Ovary (tissue), 10 donors: ENCODE measurements at regions of chr2 and their contacts with region 1.

Region 1: GRCh38 chr2:177263451-177264208 is 897 bp downstream of the NFE2L2 start:
- DNase-seq: peak; percentile 99 to 100 (median 99)
- H3K4me3 ChIP-seq: peak overlapping the region; percentile 100
- H3K27ac ChIP-seq: peak overlapping the region; percentile 100
- H3K4me1 ChIP-seq: peaks cover 10% of the 10 kb centered on the region
- H3K27me3 ChIP-seq: no peaks in the 10 kb centered on the region
- CTCF ChIP-seq: peak; percentile 90 to 97 (median 97)
- EP300 ChIP-seq: peak; percentile 79
- POLR2A ChIP-seq: peak; percentile 79

Region 2: DNA sequence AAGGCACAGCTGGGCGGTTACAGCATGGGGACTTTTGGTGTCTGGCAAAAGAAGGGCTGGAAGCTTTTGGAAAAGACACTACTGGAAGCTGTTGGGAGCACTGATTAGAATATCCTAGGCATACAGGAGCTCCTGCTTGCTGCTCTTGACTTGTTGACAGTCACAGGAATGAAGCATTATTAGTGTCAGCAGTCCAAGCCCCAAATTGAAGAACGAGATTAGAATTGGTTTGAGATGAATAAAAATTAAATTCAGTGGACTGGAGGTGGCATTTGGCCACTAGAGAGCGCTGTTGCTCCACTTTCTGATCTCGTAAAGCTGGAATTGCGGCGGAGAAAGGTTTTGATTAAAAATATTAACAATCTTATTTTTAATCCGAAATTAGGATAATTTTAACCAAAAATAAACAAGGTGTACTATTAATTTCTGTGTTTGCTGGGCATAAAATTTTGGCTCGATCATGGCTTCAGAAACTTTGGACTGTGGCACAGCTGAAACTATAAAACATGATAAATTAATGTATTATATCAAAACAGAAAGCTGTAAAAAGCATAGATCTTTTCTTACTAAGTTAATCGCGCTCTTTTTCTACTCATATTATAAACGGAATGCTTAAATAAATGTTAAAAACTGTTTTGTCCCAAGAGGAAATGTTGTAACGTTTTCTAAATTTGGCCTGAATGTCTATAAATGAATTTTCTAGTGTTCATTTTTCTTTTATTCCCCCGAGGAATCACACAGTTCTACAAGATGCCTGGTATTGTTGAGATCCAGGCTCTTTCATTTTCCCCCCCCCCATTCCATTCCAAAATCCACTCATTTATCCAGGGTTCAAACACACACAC is 1136.5 kb before region 1 on chr2:
- intact Hi-C with region 1: loop called in 1 of 4 experiments (anchors 10 kb)
- DNase-seq: peak; percentile 67 to 87 (median 82)
- H3K4me3 ChIP-seq: peak overlapping the region; percentile 10
- H3K27ac ChIP-seq: no peak overlapping the region
- H3K4me1 ChIP-seq: peaks cover 2% of the 10 kb centered on the region
- H3K27me3 ChIP-seq: no peaks in the 10 kb centered on the region
- CTCF ChIP-seq: peak; percentile 88 to 95 (median 90)
- EP300 ChIP-seq: no peak
- POLR2A ChIP-seq: no peak

Region 3: GRCh38 chr2:177212106-177212890 is 51.3 kb before region 1 on chr2 and contains the start of gene HNRNPA3:
- intact Hi-C with region 1: loop called (anchors 1 to 5 kb)
- DNase-seq: peak; percentile 99 to 100 (median 100)
- H3K4me3 ChIP-seq: peak within 1 kb of the TSS; percentile 94
- H3K27ac ChIP-seq: peak within 1 kb of the TSS; percentile 99
- H3K4me1 ChIP-seq: peaks cover 3% of the 10 kb centered on the region
- H3K27me3 ChIP-seq: no peaks in the 10 kb centered on the region
- CTCF ChIP-seq: peak in 2 of 3 donors; percentile 32 to 33
- EP300 ChIP-seq: peak; percentile 89
- POLR2A ChIP-seq: peak; percentile 95
- total RNA-seq, gene HNRNPA3: 71.0 to 240 (median 216) TPM

Region 4: DNA sequence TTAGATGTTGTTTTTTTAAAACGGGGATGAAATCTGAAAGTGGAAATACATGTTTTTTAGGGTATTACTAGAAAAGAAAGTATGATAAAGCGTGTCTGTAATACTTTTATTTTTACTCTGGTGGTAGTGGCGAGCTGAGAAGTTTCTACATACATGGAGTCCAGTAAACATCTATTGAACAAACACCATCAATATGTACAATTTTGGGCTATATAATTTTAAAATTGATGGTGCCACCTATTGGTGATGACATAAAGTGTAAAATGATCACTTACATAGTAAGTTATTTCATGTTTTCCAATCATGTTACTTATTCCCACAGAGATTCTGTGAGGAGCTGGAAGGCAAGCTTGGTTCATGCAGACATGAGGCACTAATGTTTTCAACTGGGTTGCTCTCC is 32.4 kb after region 1 on chr2:
- intact Hi-C with region 1: loop called in 1 of 4 experiments (anchors 5 kb)
- DNase-seq: no peak
- H3K4me3 ChIP-seq: no peak overlapping the region
- H3K27ac ChIP-seq: peak overlapping the region in 1 of 2 donors; percentile 67
- H3K4me1 ChIP-seq: peaks cover 1% of the 10 kb centered on the region
- H3K27me3 ChIP-seq: no peaks in the 10 kb centered on the region
- CTCF ChIP-seq: peak in 2 of 3 donors; percentile 29 to 40
- EP300 ChIP-seq: no peak
- POLR2A ChIP-seq: no peak

Region 5: DNA sequence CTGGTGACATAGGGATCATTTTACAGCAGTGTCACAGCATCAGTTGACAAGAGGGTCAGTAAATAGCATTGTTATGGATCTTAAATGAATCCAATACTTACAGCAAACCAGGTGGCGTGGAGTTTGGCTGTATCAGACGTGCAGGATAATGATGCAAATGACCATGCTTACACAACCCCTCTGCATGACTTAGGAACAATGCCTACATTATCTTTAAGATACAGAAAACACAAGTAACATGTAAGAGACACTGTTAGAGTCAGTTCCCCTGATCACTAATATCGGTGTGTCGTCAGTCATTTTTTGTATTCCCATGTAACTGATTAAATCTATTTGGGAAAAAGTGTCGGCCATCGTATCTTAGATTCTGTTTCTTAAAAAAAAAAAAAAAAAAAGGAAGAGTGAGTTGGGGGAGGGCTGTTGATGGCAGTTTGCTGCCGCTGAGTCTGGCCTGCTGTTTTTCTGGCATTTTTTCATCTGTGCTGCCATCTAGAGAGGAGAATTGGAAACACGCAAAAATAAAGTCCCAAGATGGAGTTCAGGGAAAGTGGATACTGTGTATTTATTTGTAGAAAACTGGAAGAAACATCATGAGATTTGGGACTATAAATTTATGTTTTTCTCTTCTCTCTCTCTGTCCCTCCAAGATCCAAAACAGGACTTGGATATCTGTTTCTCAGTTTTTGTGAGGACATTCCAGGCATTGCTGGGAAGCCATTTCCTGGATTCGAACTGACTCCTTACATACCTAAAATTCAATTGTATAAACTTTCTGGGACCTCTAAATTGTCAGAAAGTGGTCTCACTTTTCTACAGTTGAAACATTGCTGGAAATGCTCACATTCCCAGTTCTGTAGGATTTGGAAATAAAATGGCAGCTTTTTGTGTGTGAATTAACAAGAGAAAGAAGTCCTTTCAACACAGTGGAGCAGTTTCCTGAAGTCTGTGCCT is 68.7 kb after region 1 on chr2:
- intact Hi-C with region 1: loop called in 3 of 4 experiments (anchors 1 to 10 kb)
- DNase-seq: peak; percentile 46 to 70 (median 56)
- H3K4me3 ChIP-seq: no peak overlapping the region
- H3K27ac ChIP-seq: peak overlapping the region in 1 of 2 donors; percentile 59
- H3K4me1 ChIP-seq: peaks cover 1% of the 10 kb centered on the region
- H3K27me3 ChIP-seq: no peaks in the 10 kb centered on the region
- CTCF ChIP-seq: peak; percentile 55 to 78 (median 68)
- EP300 ChIP-seq: no peak
- POLR2A ChIP-seq: no peak